ENCODE measurements at regions of chr21 and their contacts with region 1.

Region 1: GRCh38 chr21:33199516-33200217 is 30.1 kb upstream of the IFNAR2 start:
- ATAC-seq: peak; percentile 61 to 91 (median 84)
- H3K4me3 ChIP-seq: no peak overlapping the region
- H3K27ac ChIP-seq: no peak overlapping the region
- H3K4me1 ChIP-seq: peaks cover 3 to 7% of the 10 kb centered on the region in 2 donors

Region 2: GRCh38 chr21:33441489-33442477 is 242.1 kb after region 1 on chr21:
- in situ Hi-C with region 1: loop called in 3 of 9 experiments (anchors 10 kb)
- ATAC-seq: peak in 7 of 8 experiments; percentile 30 to 94 (median 83)
- H3K4me3 ChIP-seq: no peak overlapping the region
- H3K27ac ChIP-seq: no peak overlapping the region
- H3K4me1 ChIP-seq: no peaks in the 10 kb centered on the region